Pancreas (tissue), 10 donors: ENCODE measurements at regions of chr10 and their contacts with region 1.

Region 1: DNA sequence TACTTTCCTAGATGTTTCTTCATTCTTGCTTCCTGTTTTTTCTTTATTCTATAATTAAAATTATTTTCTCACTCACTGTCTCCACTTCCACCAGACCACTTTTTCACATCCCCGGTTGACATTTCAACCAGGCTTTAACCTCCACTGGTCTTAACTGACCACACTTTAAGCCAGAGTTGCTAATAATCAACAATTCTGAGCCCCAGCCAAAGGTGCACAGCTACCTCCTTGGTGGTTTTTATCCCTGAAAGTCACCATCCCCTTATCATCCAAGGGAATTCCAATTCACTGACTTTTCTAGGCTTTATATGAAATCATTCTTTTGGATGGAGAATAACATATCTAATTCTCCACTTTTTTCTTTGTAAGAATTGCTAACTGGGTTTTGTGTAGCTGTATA is 138.9 kb downstream of the FRMD4A start:
- DNase-seq: no peak
- ATAC-seq: no peak
- H3K4me3 ChIP-seq: no peak overlapping the region
- H3K27ac ChIP-seq: no peak overlapping the region
- H3K4me1 ChIP-seq: peaks cover 4 to 6% (median 4%) of the 10 kb centered on the region in 3 donors
- H3K27me3 ChIP-seq: no peaks in the 10 kb centered on the region
- CTCF ChIP-seq: no peak

Region 2: DNA sequence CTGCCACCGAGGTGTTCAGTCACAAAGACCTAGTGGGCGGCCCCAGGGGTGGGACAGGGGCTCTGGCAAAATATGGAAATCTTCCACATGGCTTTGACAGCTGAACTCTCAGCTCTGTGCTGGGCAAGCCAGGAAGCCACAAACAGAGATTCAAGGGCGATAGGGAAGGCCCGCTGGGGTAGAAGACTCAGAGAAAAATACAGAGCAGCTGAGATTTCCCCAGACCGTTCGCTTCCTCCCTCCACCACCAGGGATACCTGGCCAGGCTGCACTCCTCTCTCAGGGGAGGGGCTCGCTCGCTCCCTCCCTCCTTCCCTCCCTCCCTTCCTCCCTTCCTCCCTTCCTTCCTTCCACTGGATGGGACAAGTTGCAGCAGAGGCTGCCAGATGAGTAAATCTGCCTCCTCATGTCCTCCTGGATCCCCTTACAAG is 344.7 kb before region 1 on chr10:
- intact Hi-C with region 1: no loop called
- DNase-seq: no peak
- ATAC-seq: no peak
- H3K4me3 ChIP-seq: no peak overlapping the region
- H3K27ac ChIP-seq: no peak overlapping the region
- H3K4me1 ChIP-seq: no peaks in the 10 kb centered on the region
- H3K27me3 ChIP-seq: no peaks in the 10 kb centered on the region
- CTCF ChIP-seq: no peak

Region 3: DNA sequence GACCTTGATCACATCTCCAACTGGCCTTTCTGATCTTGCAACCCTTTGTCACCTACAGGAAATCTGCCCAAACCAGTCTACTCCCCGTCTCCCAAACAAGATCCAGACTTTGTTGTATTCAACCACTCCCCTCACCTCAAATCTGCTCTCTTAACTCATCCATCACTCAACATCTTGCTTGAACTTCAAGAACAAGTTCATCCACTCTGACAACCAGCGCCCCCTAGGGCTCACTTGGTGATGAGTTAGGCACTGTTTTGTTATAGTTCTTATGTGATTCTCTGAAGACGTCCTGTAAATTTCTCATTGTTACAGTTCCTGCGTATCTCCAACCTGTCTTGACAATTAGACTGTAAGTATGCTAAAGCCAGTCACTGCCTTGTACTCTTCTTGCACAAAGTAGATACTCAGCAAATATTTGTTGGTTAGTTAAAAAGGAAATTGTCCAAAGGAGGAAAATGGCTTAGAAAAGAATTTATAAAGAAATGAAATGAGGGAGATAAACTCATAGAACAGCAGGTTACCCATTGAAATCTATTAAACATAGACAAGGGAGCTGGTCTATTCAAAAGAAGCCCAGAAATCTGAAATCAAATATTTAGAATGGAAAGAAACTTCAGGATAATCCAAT is 133.6 kb after region 1 on chr10:
- intact Hi-C with region 1: loop called in 1 of 3 experiments (anchors 10 kb)
- DNase-seq: peak in 5 of 6 donors; percentile 30 to 84 (median 76)
- ATAC-seq: peak in 2 of 4 donors; percentile 52 to 71
- H3K4me3 ChIP-seq: no peak overlapping the region
- H3K27ac ChIP-seq: no peak overlapping the region
- H3K4me1 ChIP-seq: no peaks in the 10 kb centered on the region
- H3K27me3 ChIP-seq: no peaks in the 10 kb centered on the region
- CTCF ChIP-seq: peak; percentile 16 to 56 (median 42)

Region 4: DNA sequence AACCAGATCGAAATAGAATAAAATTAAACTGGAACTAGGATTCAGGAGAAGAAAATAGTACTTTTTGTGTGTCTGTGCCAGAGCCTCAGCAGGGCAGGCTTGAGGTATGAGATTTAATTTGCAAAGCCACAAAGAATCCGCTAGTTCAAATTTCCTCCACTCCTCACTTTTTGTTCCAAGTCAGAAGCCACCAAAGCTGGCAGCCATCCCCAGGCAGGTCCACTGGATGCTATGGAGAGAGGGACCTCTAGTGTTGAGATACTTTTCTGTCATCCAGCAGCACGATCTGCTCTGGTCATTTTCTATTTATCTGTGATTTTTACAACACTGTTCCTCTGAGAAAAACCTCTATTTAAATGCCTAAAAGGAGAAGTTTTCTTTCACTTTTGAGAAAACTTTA is 286.7 kb after region 1 on chr10:
- intact Hi-C with region 1: loop called in 2 of 3 experiments (anchors 5 to 10 kb)
- DNase-seq: peak; percentile 69 to 88 (median 78)
- ATAC-seq: peak; percentile 93 to 98 (median 96)
- H3K4me3 ChIP-seq: no peak overlapping the region
- H3K27ac ChIP-seq: no peak overlapping the region
- H3K4me1 ChIP-seq: peaks cover 0 to 8% (median 0%) of the 10 kb centered on the region in 3 donors
- H3K27me3 ChIP-seq: no peaks in the 10 kb centered on the region
- CTCF ChIP-seq: peak; percentile 13 to 55 (median 54)